MCF 10A (cell line): ENCODE measurements at regions of chr9 and their contacts with region 1.

Region 1: GRCh38 chr9:97921959-97922724 is at the start of gene TRMO:
- DNase-seq: peak; percentile 97
- H3K4me3 Mint-ChIP-seq: peak within 1 kb of the TSS; percentile 87
- H3K27ac Mint-ChIP-seq: peak within 1 kb of the TSS; percentile 100
- H3K4me1 Mint-ChIP-seq: peaks cover 19% of the 10 kb centered on the region
- H3K27me3 Mint-ChIP-seq: peaks cover 25% of the 10 kb centered on the region
- CTCF ChIP-seq: peak; percentile 36
- total RNA-seq, gene TRMO: 10.0 and 10.3 TPM in 2 replicates

Region 2: GRCh38 chr9:97696803-97697601 is 225.1 kb before region 1 on chr9 and contains the start of gene XPA:
- CTCF ChIA-PET with region 1: interaction called, 4 read pairs
- POLR2A ChIA-PET with region 1: interaction called, 25 read pairs
- intact Hi-C with region 1: no loop called
- DNase-seq: peak; percentile 96
- H3K4me3 Mint-ChIP-seq: peak within 1 kb of the TSS; percentile 86
- H3K27ac Mint-ChIP-seq: peak within 1 kb of the TSS; percentile 80
- H3K4me1 Mint-ChIP-seq: peaks cover 38% of the 10 kb centered on the region
- H3K27me3 Mint-ChIP-seq: no peaks in the 10 kb centered on the region
- CTCF ChIP-seq: no peak
- total RNA-seq, gene XPA: 11.8 and 12.3 TPM in 2 replicates

Region 3: GRCh38 chr9:97830884-97831829 is 91.0 kb before region 1 on chr9:
- CTCF ChIA-PET with region 1: no interaction called
- POLR2A ChIA-PET with region 1: no interaction called
- intact Hi-C with region 1: no loop called
- DNase-seq: no peak
- H3K4me3 Mint-ChIP-seq: no peak overlapping the region
- H3K27ac Mint-ChIP-seq: no peak overlapping the region
- H3K4me1 Mint-ChIP-seq: no peaks in the 10 kb centered on the region
- H3K27me3 Mint-ChIP-seq: peaks cover 3% of the 10 kb centered on the region
- CTCF ChIP-seq: no peak

Region 4: GRCh38 chr9:97900738-97901565 is 21.2 kb before region 1 on chr9:
- CTCF ChIA-PET with region 1: interaction called, 41 read pairs
- POLR2A ChIA-PET with region 1: interaction called, 7 read pairs
- intact Hi-C with region 1: no loop called
- DNase-seq: peak; percentile 68
- H3K4me3 Mint-ChIP-seq: no peak overlapping the region
- H3K27ac Mint-ChIP-seq: no peak overlapping the region
- H3K4me1 Mint-ChIP-seq: peaks cover 5% of the 10 kb centered on the region
- H3K27me3 Mint-ChIP-seq: no peaks in the 10 kb centered on the region
- CTCF ChIP-seq: peak; percentile 64

Region 5: GRCh38 chr9:97954550-97954989 is 32.4 kb after region 1 on chr9:
- CTCF ChIA-PET with region 1: interaction called, 19 read pairs
- POLR2A ChIA-PET with region 1: interaction called, 3 read pairs
- intact Hi-C with region 1: loop called (anchors 1 kb)
- DNase-seq: peak; percentile 64
- H3K4me3 Mint-ChIP-seq: no peak overlapping the region
- H3K27ac Mint-ChIP-seq: no peak overlapping the region
- H3K4me1 Mint-ChIP-seq: no peaks in the 10 kb centered on the region
- H3K27me3 Mint-ChIP-seq: peaks cover 13% of the 10 kb centered on the region
- CTCF ChIP-seq: peak; percentile 69

Region 6: GRCh38 chr9:98056269-98057137 is 134.4 kb after region 1 on chr9 and contains the start of gene NANS:
- CTCF ChIA-PET with region 1: interaction called, 5 read pairs
- POLR2A ChIA-PET with region 1: interaction called, 26 read pairs
- intact Hi-C with region 1: loop called (anchors 5 kb)
- DNase-seq: peak; percentile 94
- H3K4me3 Mint-ChIP-seq: peak within 1 kb of the TSS; percentile 98
- H3K27ac Mint-ChIP-seq: peak within 1 kb of the TSS; percentile 97
- H3K4me1 Mint-ChIP-seq: peaks cover 4% of the 10 kb centered on the region
- H3K27me3 Mint-ChIP-seq: no peaks in the 10 kb centered on the region
- CTCF ChIP-seq: no peak
- total RNA-seq, gene NANS: 80.8 and 102 TPM in 2 replicates

Region 7: DNA sequence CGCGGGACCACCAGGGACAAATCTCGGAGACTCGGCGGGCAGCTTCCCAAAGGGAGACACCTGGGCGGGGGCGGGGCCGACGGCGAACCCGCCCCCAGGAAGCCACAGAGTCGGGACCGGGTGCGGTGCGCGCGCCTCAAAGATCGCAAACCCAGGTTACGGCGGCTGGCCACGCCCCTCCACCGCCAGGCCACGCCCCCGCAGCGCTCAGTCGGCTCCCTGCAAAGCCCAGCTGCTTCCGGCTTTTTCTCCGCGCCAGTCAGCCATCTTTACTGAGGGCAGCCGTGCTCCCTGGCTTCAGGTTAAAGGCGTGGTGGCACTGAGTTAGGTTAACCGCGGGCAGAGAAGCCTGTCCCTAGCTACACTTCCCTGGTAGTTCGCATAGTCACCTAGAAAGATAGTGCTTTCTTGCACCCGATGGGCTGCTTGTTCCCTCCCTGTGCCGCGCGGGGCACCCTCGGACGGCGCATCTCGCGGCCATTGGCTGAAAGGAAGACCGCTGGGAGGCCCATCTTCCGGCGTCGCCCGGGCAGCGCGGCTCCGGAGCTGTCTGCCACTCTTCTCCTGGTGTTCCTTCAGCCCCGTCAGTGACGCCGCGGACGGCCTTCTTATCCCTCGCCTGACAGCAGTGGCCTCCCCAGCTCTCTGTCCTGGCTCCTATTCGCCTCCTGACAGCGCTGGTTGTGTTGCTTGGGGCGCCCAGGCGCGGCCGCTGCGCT is 333.6 kb after region 1 on chr9 and contains the start of gene TBC1D2:
- CTCF ChIA-PET with region 1: interaction called, 8 read pairs
- POLR2A ChIA-PET with region 1: interaction called, 53 read pairs
- intact Hi-C with region 1: no loop called
- DNase-seq: peak; percentile 94
- H3K4me3 Mint-ChIP-seq: peak within 1 kb of the TSS; percentile 96
- H3K27ac Mint-ChIP-seq: peak within 1 kb of the TSS; percentile 98
- H3K4me1 Mint-ChIP-seq: peaks cover 42% of the 10 kb centered on the region
- H3K27me3 Mint-ChIP-seq: no peaks in the 10 kb centered on the region
- CTCF ChIP-seq: no peak
- total RNA-seq, gene TBC1D2: 58.4 and 62.7 TPM in 2 replicates